GM18951 (cell line): ENCODE measurements at regions of chr19 and their contacts with region 1.

Region 1: GRCh38 chr19:39554701-39555311 is 14.8 kb upstream of the EID2 start:
- POLR2A ChIP-seq: no peak

Region 2: DNA sequence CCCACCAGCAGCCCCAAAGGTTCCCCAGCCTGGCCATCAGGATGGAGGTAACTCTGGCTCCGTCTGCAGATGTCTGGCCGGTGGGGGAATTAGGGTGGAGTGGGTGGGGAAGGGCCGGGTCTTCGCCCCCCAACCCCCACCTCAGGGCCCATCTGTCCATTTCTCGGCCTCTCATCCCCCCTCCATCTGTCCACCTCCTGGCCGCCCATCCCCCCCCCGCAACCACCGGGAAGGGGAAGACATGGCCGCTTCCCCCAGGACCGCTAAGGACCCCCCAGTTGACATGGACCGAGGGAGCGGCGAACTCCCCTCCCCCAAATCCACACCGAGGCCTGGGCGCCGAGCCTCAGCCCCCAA is 234.9 kb before region 1 on chr19:
- in situ Hi-C with region 1: no loop called
- POLR2A ChIP-seq: no peak

Region 3: DNA sequence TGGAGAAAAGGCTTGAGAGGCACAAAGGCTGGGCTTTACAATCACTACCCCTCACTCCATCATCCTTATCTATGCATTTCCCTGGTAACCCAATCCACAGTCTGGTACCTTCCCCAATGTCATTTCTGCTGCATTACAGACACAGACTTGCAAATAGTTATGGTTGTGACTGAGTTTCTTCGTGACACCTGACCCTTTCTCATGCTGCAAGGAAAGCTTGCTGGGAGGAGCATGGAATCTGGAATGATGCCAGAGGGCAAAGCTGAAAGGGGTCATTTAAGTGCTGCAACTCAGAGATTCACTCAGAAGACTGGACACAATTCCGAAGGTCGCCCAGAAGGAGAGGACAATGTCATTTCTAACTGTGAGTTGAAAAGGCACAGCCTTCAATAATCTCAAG is 100.8 kb after region 1 on chr19 and contains the start of gene LGALS16:
- in situ Hi-C with region 1: loop called (anchors 5 kb)
- POLR2A ChIP-seq: no peak